ENCODE measurements at regions of chr2 and their contacts with region 1.

Region 1: GRCh38 chr2:64617631-64618151 is 36.0 kb downstream of the SERTAD2 start:
- DNase-seq: no peak
- H3K4me3 ChIP-seq: no peak overlapping the region
- H3K27me3 ChIP-seq: peaks cover 15% of the 10 kb centered on the region
- CTCF ChIP-seq: no peak

Region 2: GRCh38 chr2:64080179-64080578 is 537.5 kb before region 1 on chr2:
- CTCF ChIA-PET with region 1: no interaction called
- POLR2A ChIA-PET with region 1: no interaction called
- DNase-seq: no peak
- H3K4me3 ChIP-seq: no peak overlapping the region
- H3K27me3 ChIP-seq: no peaks in the 10 kb centered on the region
- CTCF ChIP-seq: no peak

Region 3: DNA sequence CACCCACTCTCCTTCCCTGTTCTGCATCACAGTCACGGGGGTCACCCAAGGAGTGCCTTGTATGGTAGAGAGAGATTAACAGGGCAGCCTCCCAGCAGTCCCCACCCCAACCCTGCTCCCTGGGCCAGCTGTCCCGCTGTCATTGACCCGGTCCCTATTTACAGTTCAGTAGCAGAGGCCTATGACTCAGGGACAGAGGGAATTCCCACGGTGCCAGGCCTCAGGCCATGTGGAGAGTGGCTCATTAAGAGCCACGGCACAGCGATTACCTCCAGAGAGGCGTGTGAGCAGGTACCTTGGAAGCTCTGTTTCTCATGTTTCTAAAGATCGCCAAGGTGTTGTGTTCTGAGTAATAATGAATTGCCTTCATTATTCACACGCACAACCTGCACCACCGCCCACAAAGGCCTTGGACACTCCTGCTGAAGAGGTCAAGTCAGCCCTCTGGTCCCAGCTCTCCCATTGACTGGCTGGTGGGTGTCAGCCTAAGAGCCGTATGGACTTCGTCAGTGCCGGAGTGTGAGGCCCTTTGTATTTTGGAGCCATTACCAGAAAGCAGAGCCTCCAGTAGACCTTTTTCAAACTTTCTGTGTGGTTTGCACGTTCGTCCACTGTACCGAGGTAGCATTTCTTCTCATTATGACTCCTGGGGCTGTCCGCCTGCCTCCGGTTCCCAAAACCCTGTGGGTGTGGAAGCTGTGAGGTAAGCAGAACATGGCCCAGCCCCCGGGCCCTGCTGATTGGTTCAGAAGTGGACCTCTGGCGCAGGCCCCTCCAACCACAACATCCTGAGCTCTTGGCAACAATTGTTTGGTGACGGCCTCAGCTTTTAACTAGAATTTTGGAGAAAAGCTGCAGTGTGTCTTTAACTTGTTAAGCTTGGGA is 11.0 kb before region 1 on chr2:
- CTCF ChIA-PET with region 1: interaction called, 12 read pairs
- POLR2A ChIA-PET with region 1: no interaction called
- DNase-seq: no peak
- H3K4me3 ChIP-seq: no peak overlapping the region
- H3K27me3 ChIP-seq: peaks cover 21% of the 10 kb centered on the region
- CTCF ChIP-seq: no peak

Measured in BJ (cell line).